IMR-90 (cell line): ENCODE measurements at regions of chr12 and their contacts with region 1.

Region 1: GRCh38 chr12:31629756-31630732 is 29.4 kb upstream of the ETFBKMT start:
- DNase-seq: peak; percentile 55
- ATAC-seq: no peak; the same call in 1 of the 2 replicates
- H3K4me3 ChIP-seq: no peak overlapping the region
- H3K27ac ChIP-seq: no peak overlapping the region
- H3K4me1 ChIP-seq: no peaks in the 10 kb centered on the region; the same call in 1 of the 2 replicates
- H3K27me3 ChIP-seq: no peaks in the 10 kb centered on the region; the same call in 1 of the 2 replicates
- CTCF ChIP-seq: no peak
- POLR2A ChIP-seq: no peak
- RAD21 ChIP-seq: no peak

Region 2: GRCh38 chr12:31267966-31268365 is 362.1 kb before region 1 on chr12:
- CTCF ChIA-PET with region 1: no interaction called
- POLR2A ChIA-PET with region 1: no interaction called
- dilution Hi-C with region 1: no loop called
- in situ Hi-C with region 1: loop called (anchors 10 kb)
- intact Hi-C with region 1: no loop called
- DNase-seq: no peak
- ATAC-seq: no peak
- H3K4me3 ChIP-seq: no peak overlapping the region
- H3K27ac ChIP-seq: no peak overlapping the region
- H3K4me1 ChIP-seq: no peaks in the 10 kb centered on the region
- H3K27me3 ChIP-seq: no peaks in the 10 kb centered on the region
- CTCF ChIP-seq: no peak
- POLR2A ChIP-seq: no peak
- RAD21 ChIP-seq: no peak

Region 3: DNA sequence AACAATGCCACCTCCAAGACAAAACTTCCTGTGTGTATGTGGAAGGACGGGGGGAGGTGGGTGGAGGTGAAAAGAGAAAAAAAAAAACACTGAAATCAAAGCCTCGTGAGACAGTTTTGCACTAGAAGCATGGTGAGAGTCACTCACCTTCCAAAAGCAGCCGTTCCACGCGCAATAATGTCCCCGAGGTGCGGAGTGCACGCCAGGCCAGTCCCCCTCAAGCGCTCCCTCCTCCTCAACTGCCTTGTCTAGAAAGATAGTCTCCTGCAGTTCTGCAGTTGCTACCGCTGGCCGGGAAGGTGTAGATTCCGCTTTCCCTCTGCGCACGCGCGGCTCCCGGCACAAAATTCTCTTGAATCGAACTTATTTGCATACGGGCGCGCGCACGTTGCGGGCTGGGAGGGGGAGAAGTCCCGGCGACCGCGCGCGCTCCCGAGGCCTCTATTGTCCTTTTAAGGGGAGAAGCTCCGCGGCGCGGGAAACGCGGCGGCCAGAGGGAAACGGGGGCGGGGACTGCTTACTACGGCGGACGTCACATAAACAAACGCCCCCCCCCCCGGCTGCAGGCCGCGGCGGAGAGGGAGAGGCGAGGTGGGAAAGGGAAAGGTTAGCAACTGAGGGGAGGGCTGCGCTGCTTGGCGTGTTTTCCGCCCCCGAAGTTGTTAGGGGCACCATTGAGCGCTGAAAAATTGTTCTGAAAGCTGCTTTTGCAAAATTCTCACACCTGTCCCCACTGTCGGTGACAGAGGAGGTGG is 304.0 kb before region 1 on chr12 and contains the start of gene SINHCAF:
- CTCF ChIA-PET with region 1: interaction called, 3 read pairs
- POLR2A ChIA-PET with region 1: no interaction called
- dilution Hi-C with region 1: no loop called
- in situ Hi-C with region 1: no loop called
- intact Hi-C with region 1: loop called (anchors 5 kb)
- DNase-seq: peak; percentile 96
- ATAC-seq: peak; percentile 71
- H3K4me3 ChIP-seq: peak within 1 kb of the TSS; percentile 71
- H3K27ac ChIP-seq: peak within 1 kb of the TSS; percentile 79
- H3K4me1 ChIP-seq: no peaks in the 10 kb centered on the region; the same call in 1 of the 2 replicates
- H3K27me3 ChIP-seq: no peaks in the 10 kb centered on the region
- CTCF ChIP-seq: no peak
- POLR2A ChIP-seq: peak; percentile 79; the same call in 1 of the 2 replicates
- RAD21 ChIP-seq: no peak
- total RNA-seq, gene SINHCAF: 30.8 and 43.3 TPM in 2 replicates

Region 4: GRCh38 chr12:31406345-31406744 is 223.7 kb before region 1 on chr12:
- CTCF ChIA-PET with region 1: interaction called, 14 read pairs
- POLR2A ChIA-PET with region 1: no interaction called
- dilution Hi-C with region 1: no loop called
- in situ Hi-C with region 1: loop called (anchors 5 kb)
- intact Hi-C with region 1: no loop called
- DNase-seq: peak; percentile 11
- ATAC-seq: no peak
- H3K4me3 ChIP-seq: no peak overlapping the region
- H3K27ac ChIP-seq: no peak overlapping the region
- H3K4me1 ChIP-seq: no peaks in the 10 kb centered on the region
- H3K27me3 ChIP-seq: no peaks in the 10 kb centered on the region
- CTCF ChIP-seq: no peak
- POLR2A ChIP-seq: no peak
- RAD21 ChIP-seq: no peak

Region 5: GRCh38 chr12:31524791-31525495 is 105.1 kb before region 1 on chr12:
- CTCF ChIA-PET with region 1: no interaction called
- POLR2A ChIA-PET with region 1: no interaction called
- dilution Hi-C with region 1: no loop called
- in situ Hi-C with region 1: no loop called
- intact Hi-C with region 1: loop called (anchors 5 kb)
- DNase-seq: peak; percentile 79
- ATAC-seq: peak; percentile 30; the same call in 1 of the 2 replicates
- H3K4me3 ChIP-seq: no peak overlapping the region
- H3K27ac ChIP-seq: no peak overlapping the region
- H3K4me1 ChIP-seq: peaks cover 9% of the 10 kb centered on the region
- H3K27me3 ChIP-seq: no peaks in the 10 kb centered on the region
- CTCF ChIP-seq: no peak
- POLR2A ChIP-seq: no peak
- RAD21 ChIP-seq: no peak

Region 6: DNA sequence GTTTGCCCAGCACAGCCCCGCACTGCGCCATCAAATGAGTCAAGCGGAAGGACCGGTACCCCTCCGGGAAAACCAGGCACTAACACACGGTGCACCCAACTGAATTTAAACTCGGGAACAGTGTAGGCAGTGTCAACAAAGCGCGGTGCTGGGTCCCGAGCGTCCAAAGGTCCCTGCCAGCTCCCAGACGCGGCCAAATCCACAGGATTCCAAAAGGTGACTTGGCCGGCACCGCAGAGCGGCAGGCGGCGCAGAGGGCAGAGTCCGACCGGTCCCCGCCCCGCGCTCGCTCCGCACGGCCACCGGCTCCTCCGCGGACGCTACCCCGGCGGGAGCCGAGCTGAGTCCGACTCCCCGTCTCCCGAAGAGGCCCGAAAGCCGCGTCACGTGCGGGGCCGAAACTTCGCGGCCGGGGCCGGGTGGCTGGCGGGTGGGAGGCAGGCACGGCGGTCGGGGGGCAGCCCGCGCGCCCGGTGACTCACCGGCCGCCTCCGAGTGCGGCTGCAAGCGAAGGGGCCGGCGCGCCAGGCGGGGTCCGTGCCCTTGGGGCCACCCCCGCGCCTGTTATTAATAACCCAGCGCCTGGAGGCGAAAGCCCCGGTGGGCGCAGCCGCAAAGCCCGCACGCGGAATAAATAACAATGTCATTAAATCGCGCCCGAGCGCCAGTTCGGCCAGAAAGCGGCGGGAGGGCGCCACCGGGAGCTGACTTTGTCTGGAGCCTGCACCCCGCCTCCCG is 40.0 kb before region 1 on chr12:
- CTCF ChIA-PET with region 1: no interaction called
- POLR2A ChIA-PET with region 1: no interaction called
- dilution Hi-C with region 1: no loop called
- in situ Hi-C with region 1: no loop called
- intact Hi-C with region 1: loop called (anchors 5 kb)
- DNase-seq: peak; percentile 58
- ATAC-seq: peak; percentile 54
- H3K4me3 ChIP-seq: peak overlapping the region; percentile 73
- H3K27ac ChIP-seq: peak overlapping the region; percentile 79
- H3K4me1 ChIP-seq: peaks cover 7% of the 10 kb centered on the region
- H3K27me3 ChIP-seq: no peaks in the 10 kb centered on the region
- CTCF ChIP-seq: no peak
- POLR2A ChIP-seq: peak; percentile 63; the same call in 1 of the 2 replicates
- RAD21 ChIP-seq: no peak